Endothelial cell of umbilical vein (primary cell): ENCODE measurements at regions of chr1 and their contacts with region 1.

Region 1: GRCh38 chr1:203216274-203217138 is 13.0 kb downstream of the CHIT1 start:
- DNase-seq: peak; percentile 74
- H3K4me3 ChIP-seq: no peak overlapping the region
- H3K27ac ChIP-seq: no peak overlapping the region
- H3K4me1 ChIP-seq: no peaks in the 10 kb centered on the region
- H3K27me3 ChIP-seq: peaks cover 1 to 6% of the 10 kb centered on the region in 2 experiments
- CTCF ChIP-seq: peak; percentile 61 to 68
- POLR2A ChIP-seq: no peak

Region 2: GRCh38 chr1:203038891-203039608 is 177.5 kb before region 1 on chr1:
- CTCF ChIA-PET with region 1: interaction called, 363 read pairs
- POLR2A ChIA-PET with region 1: interaction called, 3 read pairs
- dilution Hi-C with region 1: no loop called
- intact Hi-C with region 1: loop called (anchors 1 kb)
- DNase-seq: peak; percentile 57
- H3K4me3 ChIP-seq: no peak overlapping the region
- H3K27ac ChIP-seq: no peak overlapping the region
- H3K4me1 ChIP-seq: no peaks in the 10 kb centered on the region
- H3K27me3 ChIP-seq: peaks cover 0 to 18% of the 10 kb centered on the region in 2 experiments
- CTCF ChIP-seq: peak; percentile 86
- POLR2A ChIP-seq: no peak

Region 3: GRCh38 chr1:203101915-203102634 is 114.4 kb before region 1 on chr1:
- CTCF ChIA-PET with region 1: interaction called, 11 read pairs
- POLR2A ChIA-PET with region 1: no interaction called
- dilution Hi-C with region 1: no loop called
- intact Hi-C with region 1: no loop called
- DNase-seq: no peak
- H3K4me3 ChIP-seq: no peak overlapping the region
- H3K27ac ChIP-seq: no peak overlapping the region
- H3K4me1 ChIP-seq: no peaks in the 10 kb centered on the region
- H3K27me3 ChIP-seq: peaks cover 2 to 31% of the 10 kb centered on the region in 2 experiments
- CTCF ChIP-seq: no peak
- POLR2A ChIP-seq: no peak

Region 4: DNA sequence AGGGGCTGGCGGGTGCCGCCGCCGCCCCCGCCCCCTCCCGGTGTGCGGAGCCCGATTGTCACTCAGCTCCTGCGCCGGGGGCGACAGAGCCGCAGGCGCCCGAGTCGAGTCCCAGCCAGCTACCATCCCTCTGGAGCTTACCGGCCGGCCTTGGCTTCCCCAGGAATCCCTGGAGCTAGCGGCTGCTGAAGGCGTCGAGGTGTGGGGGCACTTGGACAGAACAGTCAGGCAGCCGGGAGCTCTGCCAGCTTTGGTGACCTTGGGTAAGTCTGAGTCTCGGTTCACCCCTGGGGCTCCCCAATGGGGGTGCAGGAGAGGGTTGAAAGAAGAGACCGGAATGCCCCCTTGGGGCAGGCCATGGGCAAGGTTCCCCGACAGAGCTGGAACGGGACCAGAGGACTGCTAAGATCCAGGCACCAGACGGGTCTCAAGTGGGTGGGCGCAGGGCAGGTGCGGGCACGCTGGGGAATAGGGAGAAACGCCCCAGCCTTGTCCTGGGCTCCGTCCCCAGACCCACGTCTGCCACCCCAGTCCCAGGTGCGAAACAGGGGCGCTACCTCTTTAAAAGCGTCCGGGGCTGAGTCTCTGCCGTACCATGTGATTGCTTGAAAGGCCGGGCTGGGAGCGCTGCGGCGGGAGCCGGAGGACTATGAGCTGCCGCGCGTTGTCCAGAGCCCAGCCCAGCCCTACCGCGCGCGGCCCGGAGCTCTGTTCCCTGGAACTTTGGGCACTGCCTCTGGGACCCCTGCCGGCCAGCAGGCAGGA is 88.7 kb before region 1 on chr1 and contains the start of gene ADORA1:
- CTCF ChIA-PET with region 1: interaction called, 341 read pairs
- POLR2A ChIA-PET with region 1: no interaction called
- dilution Hi-C with region 1: no loop called
- intact Hi-C with region 1: no loop called
- DNase-seq: no peak
- H3K4me3 ChIP-seq: no peak within 1 kb of the TSS
- H3K27ac ChIP-seq: no peak within 1 kb of the TSS
- H3K4me1 ChIP-seq: peaks cover 4% of the 10 kb centered on the region
- H3K27me3 ChIP-seq: peaks cover 25 to 54% of the 10 kb centered on the region in 2 experiments
- CTCF ChIP-seq: no peak
- POLR2A ChIP-seq: no peak
- total RNA-seq, gene ADORA1: not detected in 2 replicates

Region 5: GRCh38 chr1:203199816-203200571 is 16.5 kb before region 1 on chr1:
- CTCF ChIA-PET with region 1: interaction called, 18 read pairs
- POLR2A ChIA-PET with region 1: no interaction called
- dilution Hi-C with region 1: no loop called
- intact Hi-C with region 1: no loop called
- DNase-seq: no peak
- H3K4me3 ChIP-seq: no peak overlapping the region
- H3K27ac ChIP-seq: no peak overlapping the region
- H3K4me1 ChIP-seq: no peaks in the 10 kb centered on the region
- H3K27me3 ChIP-seq: peaks cover 7 to 8% of the 10 kb centered on the region in 2 experiments
- CTCF ChIP-seq: no peak
- POLR2A ChIP-seq: no peak

Region 6: DNA sequence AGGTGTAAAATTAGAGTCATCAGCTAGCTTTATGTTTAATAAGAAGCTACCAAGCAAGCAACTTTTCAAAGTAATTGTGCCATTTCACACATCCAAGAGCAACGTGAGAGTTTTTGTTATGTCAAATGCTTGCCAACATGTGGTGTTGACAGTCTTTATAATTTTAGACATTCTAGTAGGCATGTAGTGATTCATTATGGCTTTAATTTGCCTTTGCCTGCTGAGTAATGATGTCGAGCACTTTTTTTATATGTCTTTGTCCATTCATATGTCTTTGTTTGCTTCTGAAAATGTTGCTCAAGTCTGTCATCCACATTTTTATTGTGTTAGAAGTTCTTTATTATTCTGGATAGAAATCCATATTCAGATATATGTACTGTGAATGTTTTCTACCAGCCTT is 34.4 kb after region 1 on chr1:
- CTCF ChIA-PET with region 1: no interaction called
- POLR2A ChIA-PET with region 1: no interaction called
- dilution Hi-C with region 1: no loop called
- intact Hi-C with region 1: no loop called
- DNase-seq: no peak
- H3K4me3 ChIP-seq: no peak overlapping the region
- H3K27ac ChIP-seq: no peak overlapping the region
- H3K4me1 ChIP-seq: no peaks in the 10 kb centered on the region
- H3K27me3 ChIP-seq: peaks cover 13 to 35% of the 10 kb centered on the region in 2 experiments
- CTCF ChIP-seq: no peak
- POLR2A ChIP-seq: no peak

Region 7: GRCh38 chr1:203373991-203374390 is 157.5 kb after region 1 on chr1:
- CTCF ChIA-PET with region 1: no interaction called
- POLR2A ChIA-PET with region 1: no interaction called
- dilution Hi-C with region 1: no loop called
- intact Hi-C with region 1: no loop called
- DNase-seq: no peak
- H3K4me3 ChIP-seq: no peak overlapping the region
- H3K27ac ChIP-seq: no peak overlapping the region
- H3K4me1 ChIP-seq: no peaks in the 10 kb centered on the region
- H3K27me3 ChIP-seq: peaks cover 22 to 28% of the 10 kb centered on the region in 2 experiments
- CTCF ChIP-seq: no peak
- POLR2A ChIP-seq: no peak